ENCODE measurements at regions of chr20 and their contacts with region 1.

Region 1: DNA sequence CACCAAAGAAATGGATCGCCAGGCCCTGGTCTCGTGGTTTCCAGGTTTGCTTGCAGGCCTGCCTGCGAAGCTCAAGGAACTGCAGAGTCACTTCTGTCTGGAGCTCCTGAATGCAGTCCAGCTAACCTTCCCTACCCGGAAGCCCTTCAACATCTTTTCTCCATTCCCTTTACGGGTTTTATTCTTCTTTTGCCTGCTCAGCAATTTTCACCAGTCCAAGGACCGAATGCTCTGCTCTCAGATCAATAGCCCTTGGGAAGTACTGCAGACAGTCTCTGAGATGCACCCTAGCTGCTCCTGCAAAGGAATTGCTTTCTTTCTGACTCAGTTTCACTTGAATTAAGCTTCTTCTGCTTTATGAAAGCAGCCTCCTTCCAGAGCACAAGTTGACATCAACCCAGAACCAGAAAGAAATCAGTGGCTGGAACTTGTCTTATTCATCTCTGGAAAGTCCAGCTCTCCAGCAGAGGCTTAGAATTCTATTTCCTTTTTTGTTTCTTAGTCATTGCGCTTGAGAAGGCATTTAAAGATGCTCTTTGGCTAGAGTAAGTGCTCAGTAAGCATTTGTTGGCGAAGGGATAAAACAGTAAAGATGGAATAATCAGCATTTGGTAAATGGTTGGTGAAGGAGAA is 18.7 kb upstream of the YWHAB start:
- DNase-seq: no peak
- H3K4me3 Mint-ChIP-seq: peak overlapping the region; percentile 55
- H3K27ac Mint-ChIP-seq: no peak overlapping the region
- H3K4me1 Mint-ChIP-seq: peaks cover 9% of the 10 kb centered on the region
- H3K27me3 Mint-ChIP-seq: peaks cover 24% of the 10 kb centered on the region

Region 2: GRCh38 chr20:44683263-44684046 is 183.4 kb before region 1 on chr20:
- intact Hi-C with region 1: loop called (anchors 1 kb)
- DNase-seq: peak; percentile 85
- H3K4me3 Mint-ChIP-seq: no peak overlapping the region
- H3K27ac Mint-ChIP-seq: no peak overlapping the region
- H3K4me1 Mint-ChIP-seq: peaks cover 7% of the 10 kb centered on the region
- H3K27me3 Mint-ChIP-seq: peaks cover 2% of the 10 kb centered on the region

Region 3: GRCh38 chr20:44747166-44748004 is 119.4 kb before region 1 on chr20:
- intact Hi-C with region 1: loop called (anchors 1 kb)
- DNase-seq: peak; percentile 87
- H3K4me3 Mint-ChIP-seq: peak overlapping the region; percentile 7
- H3K27ac Mint-ChIP-seq: peak overlapping the region; percentile 34
- H3K4me1 Mint-ChIP-seq: peaks cover 9% of the 10 kb centered on the region
- H3K27me3 Mint-ChIP-seq: peaks cover 30% of the 10 kb centered on the region

Region 4: GRCh38 chr20:45095753-45096371 is 229.0 kb after region 1 on chr20:
- intact Hi-C with region 1: no loop called
- DNase-seq: peak; percentile 88
- H3K4me3 Mint-ChIP-seq: no peak overlapping the region
- H3K27ac Mint-ChIP-seq: no peak overlapping the region
- H3K4me1 Mint-ChIP-seq: peaks cover 5% of the 10 kb centered on the region
- H3K27me3 Mint-ChIP-seq: peaks cover 33% of the 10 kb centered on the region

Region 5: GRCh38 chr20:45229264-45230056 is 362.6 kb after region 1 on chr20:
- intact Hi-C with region 1: no loop called
- DNase-seq: peak; percentile 81
- H3K4me3 Mint-ChIP-seq: no peak overlapping the region
- H3K27ac Mint-ChIP-seq: no peak overlapping the region
- H3K4me1 Mint-ChIP-seq: no peaks in the 10 kb centered on the region
- H3K27me3 Mint-ChIP-seq: peaks cover 41% of the 10 kb centered on the region